ENCODE measurements at regions of chr11 and their contacts with region 1.

Region 1: GRCh38 chr11:64846998-64847666 is 2.7 kb upstream of the CDC42BPG start:
- DNase-seq: peak; percentile 99
- ATAC-seq: peak; percentile 70
- H3K4me3 Mint-ChIP-seq: peak overlapping the region; percentile 42; the same call in 1 of the 2 replicates
- H3K27ac Mint-ChIP-seq: peak overlapping the region; percentile 87
- H3K4me1 Mint-ChIP-seq: peaks cover 45% of the 10 kb centered on the region
- H3K27me3 Mint-ChIP-seq: no peaks in the 10 kb centered on the region
- CTCF ChIP-seq: peak; percentile 96

Region 2: GRCh38 chr11:64553551-64554201 is 293.5 kb before region 1 on chr11:
- CTCF ChIA-PET with region 1: no interaction called
- POLR2A ChIA-PET with region 1: no interaction called
- DNase-seq: peak; percentile 85
- ATAC-seq: peak; percentile 65
- H3K4me3 Mint-ChIP-seq: no peak overlapping the region
- H3K27ac Mint-ChIP-seq: no peak overlapping the region
- H3K4me1 Mint-ChIP-seq: peaks cover 27% of the 10 kb centered on the region
- H3K27me3 Mint-ChIP-seq: peaks cover 13% of the 10 kb centered on the region
- CTCF ChIP-seq: peak; percentile 98

Region 3: DNA sequence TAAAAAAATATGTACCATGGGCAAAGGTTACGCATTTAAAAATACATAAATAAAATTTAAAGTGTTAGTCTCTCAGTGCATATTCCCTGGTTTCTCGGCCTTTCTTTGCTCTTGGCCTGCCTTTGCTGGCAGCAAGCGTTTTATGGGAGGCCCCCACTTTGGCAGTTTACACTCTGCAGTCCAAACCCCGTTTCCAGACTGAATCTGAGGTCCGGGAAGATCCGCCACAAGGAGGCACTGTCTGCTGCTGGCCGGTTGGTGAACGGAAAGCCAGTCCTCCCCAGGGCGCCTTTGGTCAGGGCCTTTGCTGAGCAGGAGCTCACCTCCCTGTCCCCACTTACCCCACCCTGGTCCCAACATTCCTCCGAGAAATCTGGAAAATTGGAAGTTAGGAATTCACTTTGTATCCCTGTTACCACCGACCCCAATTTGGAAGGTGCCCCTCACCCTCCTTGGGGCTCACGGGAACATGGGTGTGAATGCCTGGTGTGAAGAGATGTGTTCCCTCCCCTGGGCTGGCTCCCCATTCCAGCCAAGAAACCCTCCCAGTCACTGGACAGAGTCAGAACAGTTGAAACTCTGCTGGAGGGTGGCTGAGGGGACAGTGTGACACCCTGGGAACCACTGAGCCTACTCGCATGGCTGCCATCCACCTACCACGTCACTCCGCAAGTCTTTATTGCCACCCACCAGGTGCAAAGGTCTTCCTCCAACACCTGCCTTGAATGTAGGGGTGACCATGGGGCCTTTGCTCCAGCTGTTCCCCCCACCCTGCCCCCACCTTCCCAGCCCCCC is 59.4 kb before region 1 on chr11:
- CTCF ChIA-PET with region 1: interaction called, 15 read pairs
- POLR2A ChIA-PET with region 1: interaction called, 3 read pairs
- DNase-seq: peak; percentile 85
- ATAC-seq: peak; percentile 91
- H3K4me3 Mint-ChIP-seq: no peak overlapping the region
- H3K27ac Mint-ChIP-seq: no peak overlapping the region
- H3K4me1 Mint-ChIP-seq: no peaks in the 10 kb centered on the region
- H3K27me3 Mint-ChIP-seq: no peaks in the 10 kb centered on the region
- CTCF ChIP-seq: peak; percentile 40

Region 4: GRCh38 chr11:64810271-64810890 is 36.8 kb before region 1 on chr11 and contains the start of gene MEN1:
- CTCF ChIA-PET with region 1: interaction called, 33 read pairs
- POLR2A ChIA-PET with region 1: no interaction called
- DNase-seq: peak; percentile 98
- ATAC-seq: peak; percentile 99
- H3K4me3 Mint-ChIP-seq: peak within 1 kb of the TSS; percentile 91
- H3K27ac Mint-ChIP-seq: peak within 1 kb of the TSS; percentile 85
- H3K4me1 Mint-ChIP-seq: peaks cover 6% of the 10 kb centered on the region; the same call in 1 of the 2 replicates
- H3K27me3 Mint-ChIP-seq: no peaks in the 10 kb centered on the region
- CTCF ChIP-seq: no peak
- total RNA-seq, gene MEN1: 47.1 to 53.3 TPM (median 51.2 TPM) in 3 replicates

Region 5: DNA sequence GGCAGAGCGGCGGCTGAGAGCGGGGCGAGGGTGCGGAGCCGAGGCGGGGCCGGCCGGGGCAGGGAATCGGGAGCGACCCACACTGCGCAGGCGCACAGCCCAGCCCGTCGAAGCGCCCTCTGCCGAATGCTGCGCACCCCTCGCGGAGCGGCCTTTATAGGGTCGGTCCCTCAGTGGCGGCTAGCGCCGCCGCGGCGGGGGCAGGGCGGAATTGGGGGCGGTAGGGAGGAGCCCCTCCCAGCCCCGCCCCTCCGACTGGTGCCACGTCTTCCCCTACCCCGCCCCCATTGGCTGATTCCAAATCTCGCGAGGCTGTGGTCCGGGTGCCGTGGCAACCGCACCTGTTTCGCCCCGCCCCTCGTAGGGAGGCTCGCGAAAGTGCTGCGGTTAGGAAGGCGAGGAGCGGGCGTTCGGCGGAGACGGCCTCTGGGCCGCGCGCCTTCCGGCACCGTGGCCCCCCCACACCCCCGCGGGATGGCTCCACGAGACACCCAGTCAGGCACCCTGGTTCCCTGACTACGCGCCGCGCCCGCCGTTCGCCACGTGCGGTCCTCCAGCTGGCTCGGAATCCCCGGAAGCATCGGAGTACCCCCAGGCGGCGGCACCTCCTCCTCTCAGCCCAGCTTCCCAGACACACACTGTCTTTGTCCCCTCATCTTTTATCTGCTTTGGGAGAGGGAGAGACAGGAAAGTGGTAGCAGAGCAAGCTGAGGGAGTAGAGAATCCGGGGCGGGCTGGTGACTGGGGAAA is 31.5 kb after region 1 on chr11 and contains the start of gene EHD1:
- CTCF ChIA-PET with region 1: interaction called, 372 read pairs
- POLR2A ChIA-PET with region 1: interaction called, 6 read pairs
- DNase-seq: peak; percentile 99
- ATAC-seq: peak; percentile 89
- H3K4me3 Mint-ChIP-seq: peak within 1 kb of the TSS; percentile 98
- H3K27ac Mint-ChIP-seq: peak within 1 kb of the TSS; percentile 92
- H3K4me1 Mint-ChIP-seq: peaks cover 20% of the 10 kb centered on the region
- H3K27me3 Mint-ChIP-seq: peaks cover 7% of the 10 kb centered on the region
- CTCF ChIP-seq: no peak
- total RNA-seq, gene EHD1: 29.9 to 38.1 TPM (median 35.2 TPM) in 3 replicates

Region 6: DNA sequence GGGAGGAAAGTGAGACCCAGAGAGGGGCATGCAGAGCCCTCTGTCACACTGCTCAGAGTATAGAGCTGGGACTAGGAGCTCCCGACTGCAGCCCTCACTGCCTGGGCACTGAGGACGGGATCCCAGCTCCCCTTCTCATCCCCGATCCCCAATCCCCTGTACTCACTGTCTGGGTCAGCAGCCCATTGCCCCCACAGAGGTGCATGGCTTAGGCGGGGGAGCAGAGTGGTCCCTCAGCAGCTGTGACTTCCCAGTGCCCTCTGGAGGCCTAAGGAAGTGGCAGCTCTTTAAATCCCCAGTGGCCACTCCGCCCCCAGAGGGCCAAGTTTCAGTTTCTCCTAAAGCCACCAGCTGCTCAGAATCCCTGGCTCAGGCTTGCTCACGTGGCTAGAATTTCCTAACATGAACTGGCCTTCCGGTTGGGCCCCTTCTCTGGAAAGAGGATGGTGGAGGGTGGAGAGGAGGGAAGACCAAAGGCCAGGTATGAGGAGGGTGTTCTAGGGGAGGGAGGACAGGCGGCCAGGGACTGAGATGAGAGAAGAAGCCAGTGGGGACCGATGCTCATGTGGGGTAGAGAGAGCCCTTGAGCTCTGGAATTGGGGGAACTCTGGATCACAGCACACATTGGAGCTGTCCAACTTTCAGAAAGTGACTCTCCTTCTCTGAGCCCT is 149.7 kb after region 1 on chr11 and contains the start of gene BATF2:
- CTCF ChIA-PET with region 1: interaction called, 39 read pairs
- POLR2A ChIA-PET with region 1: interaction called, 3 read pairs
- DNase-seq: peak; percentile 76
- ATAC-seq: peak; percentile 97
- H3K4me3 Mint-ChIP-seq: peak within 1 kb of the TSS; percentile 56
- H3K27ac Mint-ChIP-seq: peak within 1 kb of the TSS; percentile 78
- H3K4me1 Mint-ChIP-seq: peaks cover 18% of the 10 kb centered on the region
- H3K27me3 Mint-ChIP-seq: no peaks in the 10 kb centered on the region
- CTCF ChIP-seq: no peak
- total RNA-seq, gene BATF2: 1.3 to 3.2 TPM (median 2.2 TPM) in 3 replicates

Region 7: DNA sequence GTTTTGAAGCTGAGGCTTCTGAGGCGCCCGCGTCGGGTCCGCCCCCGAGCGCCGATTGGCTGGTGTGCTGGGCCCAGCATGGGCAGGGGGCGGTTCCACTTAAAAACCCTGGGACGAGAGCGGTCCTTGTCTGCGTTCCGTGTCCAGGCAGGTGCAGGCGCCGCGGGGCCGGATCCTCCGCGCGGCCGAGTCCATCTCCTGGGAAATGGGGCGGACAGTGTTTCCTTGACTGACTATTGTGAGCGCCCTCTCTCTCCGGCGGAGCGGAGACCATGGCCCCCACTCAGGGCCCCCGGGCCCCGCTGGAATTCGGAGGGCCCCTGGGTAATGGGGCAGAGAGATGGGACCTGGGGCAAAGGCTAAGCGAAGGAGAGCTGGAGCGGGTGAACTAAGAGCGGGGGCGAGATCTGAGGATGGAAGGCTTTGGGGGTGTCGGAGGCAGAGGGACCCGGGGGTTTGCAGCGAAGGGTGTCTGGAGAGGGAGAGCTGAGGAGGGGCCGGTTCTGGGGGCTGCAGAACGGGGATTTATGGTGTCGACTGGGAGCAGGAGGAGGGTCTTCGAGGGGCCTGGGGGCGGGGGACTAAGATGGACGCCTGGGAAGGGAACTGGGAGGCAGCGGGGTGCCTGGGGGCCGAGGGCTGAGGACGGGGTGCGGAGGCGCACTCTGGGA is 264.7 kb after region 1 on chr11 and contains the start of gene TM7SF2:
- CTCF ChIA-PET with region 1: interaction called, 37 read pairs
- POLR2A ChIA-PET with region 1: no interaction called
- DNase-seq: peak; percentile 97
- ATAC-seq: peak; percentile 77
- H3K4me3 Mint-ChIP-seq: peak within 1 kb of the TSS; percentile 91
- H3K27ac Mint-ChIP-seq: peak within 1 kb of the TSS; percentile 89
- H3K4me1 Mint-ChIP-seq: peaks cover 17% of the 10 kb centered on the region
- H3K27me3 Mint-ChIP-seq: no peaks in the 10 kb centered on the region
- CTCF ChIP-seq: no peak
- total RNA-seq, gene TM7SF2: 63.8 to 74.9 TPM (median 71.5 TPM) in 3 replicates

Region 8: GRCh38 chr11:65134386-65135253 is 287.5 kb after region 1 on chr11 and contains the start of gene SYVN1:
- CTCF ChIA-PET with region 1: interaction called, 10 read pairs
- POLR2A ChIA-PET with region 1: interaction called, 3 read pairs
- DNase-seq: peak; percentile 90
- ATAC-seq: peak; percentile 92
- H3K4me3 Mint-ChIP-seq: peak within 1 kb of the TSS; percentile 98
- H3K27ac Mint-ChIP-seq: peak within 1 kb of the TSS; percentile 100
- H3K4me1 Mint-ChIP-seq: peaks cover 18% of the 10 kb centered on the region
- H3K27me3 Mint-ChIP-seq: no peaks in the 10 kb centered on the region; the same call in 1 of the 2 replicates
- CTCF ChIP-seq: no peak
- total RNA-seq, gene SYVN1: 27.6 to 34.8 TPM (median 31.8 TPM) in 3 replicates

Measured in WTC11 (cell line).